Mammary epithelial cell (primary cell): ENCODE measurements at regions of chr2 and their contacts with region 1.

Region 1: GRCh38 chr2:223896833-223897311 is 48.3 kb downstream of the WDFY1 start:
- DNase-seq: peak; percentile 51
- H3K4me3 ChIP-seq: no peak overlapping the region
- H3K27ac ChIP-seq: peak overlapping the region; percentile 21
- H3K4me1 ChIP-seq: peaks cover 6% of the 10 kb centered on the region
- H3K27me3 ChIP-seq: no peaks in the 10 kb centered on the region
- CTCF ChIP-seq: no peak

Region 2: GRCh38 chr2:223944703-223945531 is 48.0 kb after region 1 on chr2 and contains the start of gene WDFY1:
- CTCF ChIA-PET with region 1: no interaction called
- dilution Hi-C with region 1: no loop called
- in situ Hi-C with region 1: no loop called
- intact Hi-C with region 1: loop called (anchors 5 kb)
- DNase-seq: peak; percentile 84
- H3K4me3 ChIP-seq: peak within 1 kb of the TSS; percentile 71 to 99 (median 93)
- H3K27ac ChIP-seq: peak within 1 kb of the TSS; percentile 74
- H3K4me1 ChIP-seq: peaks cover 21% of the 10 kb centered on the region
- H3K27me3 ChIP-seq: no peaks in the 10 kb centered on the region
- CTCF ChIP-seq: no peak
- total RNA-seq, gene WDFY1: 55.6 to 96.0 TPM

Region 3: DNA sequence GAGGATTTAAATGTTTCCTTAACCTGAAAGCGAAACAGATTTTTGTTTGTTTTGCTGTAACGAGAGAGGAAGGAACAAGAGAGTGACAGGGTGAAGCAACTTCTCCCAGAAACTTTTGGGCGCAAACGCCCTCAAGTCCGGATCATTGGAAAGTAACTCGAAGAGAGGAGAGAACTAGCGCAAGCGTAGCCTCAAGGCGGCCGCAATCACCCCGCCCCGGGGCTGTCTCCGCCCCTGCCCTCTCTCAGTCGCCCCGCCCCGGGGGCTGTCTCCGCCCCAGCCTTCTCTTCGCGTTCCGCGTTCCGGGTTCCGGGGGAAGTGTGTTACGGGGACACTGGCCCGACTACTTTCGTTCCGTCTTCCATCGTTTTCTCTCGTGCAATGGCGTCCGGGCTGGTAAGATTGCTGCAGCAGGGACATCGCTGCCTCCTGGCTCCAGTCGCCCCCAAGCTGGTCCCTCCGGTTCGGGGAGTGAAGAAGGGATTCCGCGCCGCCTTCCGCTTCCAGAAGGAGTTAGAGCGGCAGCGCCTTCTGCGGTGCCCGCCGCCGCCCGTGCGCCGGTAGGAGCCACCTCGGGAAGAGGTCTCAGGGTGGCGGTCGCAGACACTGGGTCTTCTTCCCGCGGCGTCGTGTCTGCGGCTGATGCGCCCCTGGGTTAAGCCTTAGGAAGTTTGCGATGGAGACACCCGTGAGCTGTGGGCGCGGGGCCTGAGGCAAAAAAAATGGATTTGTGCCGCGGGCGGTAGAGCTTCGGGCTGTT is 60.4 kb after region 1 on chr2 and contains the start of gene MRPL44:
- CTCF ChIA-PET with region 1: no interaction called
- dilution Hi-C with region 1: no loop called
- in situ Hi-C with region 1: no loop called
- intact Hi-C with region 1: loop called (anchors 5 kb)
- DNase-seq: peak; percentile 94
- H3K4me3 ChIP-seq: peak within 1 kb of the TSS; percentile 95 to 99 (median 98)
- H3K27ac ChIP-seq: peak within 1 kb of the TSS; percentile 79
- H3K4me1 ChIP-seq: peaks cover 45% of the 10 kb centered on the region
- H3K27me3 ChIP-seq: no peaks in the 10 kb centered on the region
- CTCF ChIP-seq: no peak
- total RNA-seq, gene MRPL44: 24.2 to 27.2 TPM

Region 4: DNA sequence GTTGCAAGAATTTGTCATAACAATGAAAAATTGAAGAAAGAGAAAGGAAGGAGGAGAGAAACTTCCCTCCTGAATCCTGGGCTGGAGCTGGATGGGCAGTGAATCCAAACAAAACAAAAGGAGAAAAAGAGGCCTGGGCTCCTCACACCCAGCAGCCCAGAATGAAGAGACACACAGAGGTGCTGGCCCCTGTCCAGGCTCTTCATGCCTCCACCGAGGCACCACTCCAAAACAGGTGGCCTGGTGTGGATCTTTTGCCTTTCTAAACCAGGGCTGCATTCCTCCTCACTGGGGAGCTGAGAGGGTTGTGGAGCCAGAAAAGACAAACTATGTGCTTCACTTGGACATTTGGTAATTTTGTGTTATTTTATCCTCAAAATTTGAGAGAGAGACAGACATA is 429.1 kb after region 1 on chr2:
- CTCF ChIA-PET with region 1: no interaction called
- dilution Hi-C with region 1: no loop called
- in situ Hi-C with region 1: no loop called
- intact Hi-C with region 1: no loop called
- DNase-seq: no peak
- H3K4me3 ChIP-seq: no peak overlapping the region
- H3K27ac ChIP-seq: no peak overlapping the region
- H3K4me1 ChIP-seq: no peaks in the 10 kb centered on the region
- H3K27me3 ChIP-seq: no peaks in the 10 kb centered on the region
- CTCF ChIP-seq: no peak